ENCODE measurements at regions of chr14 and their contacts with region 1.

Region 1: GRCh38 chr14:49892636-49893308 is at the start of gene ARF6:
- H3K4me3 Mint-ChIP-seq: peak within 1 kb of the TSS; percentile 83
- H3K27ac Mint-ChIP-seq: peak within 1 kb of the TSS; percentile 99
- H3K4me1 Mint-ChIP-seq: peaks cover 31% of the 10 kb centered on the region
- H3K27me3 Mint-ChIP-seq: no peaks in the 10 kb centered on the region

Region 2: DNA sequence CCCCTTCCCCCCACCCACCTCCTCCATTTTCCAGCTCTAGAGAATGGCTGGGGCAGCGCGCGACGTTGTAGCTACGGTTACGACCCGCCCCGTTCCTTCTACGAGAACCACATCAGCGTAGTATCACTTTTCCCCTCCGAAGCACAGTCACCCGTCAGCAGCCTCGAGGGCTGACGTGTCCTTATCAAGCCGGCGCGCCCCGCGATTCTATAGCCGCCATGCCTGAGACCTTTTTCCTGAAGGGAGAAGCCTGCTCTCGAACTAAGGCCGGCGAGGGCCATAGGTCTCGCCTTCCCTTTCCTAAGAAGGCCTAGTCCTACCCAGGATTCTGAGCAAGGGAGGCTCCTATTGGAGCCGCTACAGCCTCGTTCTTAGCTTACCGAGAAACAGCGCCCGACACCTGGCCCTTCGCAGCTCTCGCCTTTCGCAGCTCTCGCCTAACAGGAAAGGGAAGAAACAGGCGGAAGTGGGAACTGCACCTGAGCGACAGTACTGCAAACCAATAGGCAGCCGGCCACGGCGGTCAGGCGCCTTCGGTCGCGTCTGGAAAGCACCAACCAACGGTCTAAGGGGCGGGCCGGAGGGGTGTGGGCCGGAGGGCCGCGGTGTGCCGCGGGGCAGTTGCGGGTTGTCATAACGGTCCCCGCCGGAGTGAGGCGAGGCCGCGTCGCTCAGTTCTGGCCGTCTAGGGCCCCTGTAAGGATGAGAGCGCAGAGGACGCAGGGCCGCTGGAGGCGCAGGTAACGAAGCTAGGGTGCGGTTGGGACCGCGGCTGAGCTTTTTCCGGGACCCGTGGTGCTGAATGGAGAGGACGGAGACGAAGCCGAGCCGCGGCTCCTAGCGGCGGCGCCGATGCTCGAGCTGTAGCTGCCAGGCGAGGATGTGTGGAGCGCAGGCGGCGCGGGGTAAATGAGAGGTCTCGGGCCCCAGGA is 272.3 kb before region 1 on chr14 and contains the starts of genes MGAT2 and RPL36AL:
- intact Hi-C with region 1: no loop called
- H3K4me3 Mint-ChIP-seq: peak within 1 kb of the TSS; percentile 99
- H3K27ac Mint-ChIP-seq: peak within 1 kb of the TSS; percentile 100
- H3K4me1 Mint-ChIP-seq: peaks cover 27% of the 10 kb centered on the region
- H3K27me3 Mint-ChIP-seq: no peaks in the 10 kb centered on the region

Region 3: GRCh38 chr14:49867831-49868723 is 24.7 kb before region 1 on chr14:
- intact Hi-C with region 1: loop called (anchors 1 kb)
- H3K4me3 Mint-ChIP-seq: peak overlapping the region; percentile 93
- H3K27ac Mint-ChIP-seq: peak overlapping the region; percentile 98
- H3K4me1 Mint-ChIP-seq: peaks cover 29% of the 10 kb centered on the region
- H3K27me3 Mint-ChIP-seq: no peaks in the 10 kb centered on the region

Region 4: GRCh38 chr14:49879683-49880204 is 13.0 kb before region 1 on chr14:
- intact Hi-C with region 1: loop called (anchors 1 kb)
- H3K4me3 Mint-ChIP-seq: no peak overlapping the region
- H3K27ac Mint-ChIP-seq: peak overlapping the region; percentile 97
- H3K4me1 Mint-ChIP-seq: peaks cover 44% of the 10 kb centered on the region
- H3K27me3 Mint-ChIP-seq: peaks cover 3% of the 10 kb centered on the region

Region 5: GRCh38 chr14:49934646-49935045 is 41.9 kb after region 1 on chr14:
- intact Hi-C with region 1: loop called (anchors 5 kb)
- H3K4me3 Mint-ChIP-seq: no peak overlapping the region
- H3K27ac Mint-ChIP-seq: peak overlapping the region; percentile 67
- H3K4me1 Mint-ChIP-seq: peaks cover 45% of the 10 kb centered on the region
- H3K27me3 Mint-ChIP-seq: no peaks in the 10 kb centered on the region

Region 6: DNA sequence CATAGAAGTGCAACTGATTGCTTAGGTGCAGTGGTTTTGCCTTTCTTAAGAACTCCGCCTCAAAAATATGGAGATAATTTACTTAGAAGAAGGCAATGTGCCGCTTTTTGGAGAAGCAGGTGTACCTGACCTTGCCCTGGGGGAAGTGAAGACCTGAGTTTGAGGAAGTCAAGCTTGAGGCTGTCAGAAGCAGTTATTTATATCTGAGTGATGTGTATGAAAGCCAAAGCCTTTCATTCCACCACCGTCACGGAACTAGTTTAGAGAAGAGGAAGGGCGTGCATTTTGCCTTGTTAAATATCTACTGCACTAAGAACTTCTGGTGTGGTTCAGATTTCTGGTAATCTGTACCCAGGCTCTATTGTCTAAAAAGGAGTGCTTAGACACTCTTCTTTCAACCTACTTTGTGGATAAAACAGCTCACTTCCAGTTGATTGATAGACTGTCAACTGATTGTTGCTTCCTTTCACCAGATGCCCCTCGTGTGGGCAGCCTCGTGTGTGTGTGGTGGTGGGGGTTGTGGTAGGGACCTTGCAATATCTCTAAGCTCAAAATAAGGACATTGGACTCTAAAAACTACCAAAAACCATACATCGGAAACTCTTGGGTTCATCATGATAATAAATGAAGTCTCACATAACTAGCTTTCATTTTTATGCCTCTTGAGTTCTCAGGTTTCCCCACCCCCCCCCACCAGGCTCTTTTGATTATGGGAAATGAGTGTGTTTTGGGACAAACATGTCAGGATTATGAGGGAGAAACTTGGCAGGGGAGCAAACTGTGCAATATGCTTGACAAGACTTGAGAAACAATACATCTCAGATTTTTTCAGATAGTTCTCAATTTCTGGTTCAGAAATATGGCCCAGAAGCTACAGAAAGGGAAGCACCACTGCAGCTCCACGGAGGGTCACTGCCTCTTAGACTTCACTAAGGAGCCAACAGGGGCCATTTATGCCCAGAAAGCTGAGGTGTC is 78.7 kb after region 1 on chr14:
- intact Hi-C with region 1: loop called (anchors 2 kb)
- H3K4me3 Mint-ChIP-seq: peak overlapping the region; percentile 52
- H3K27ac Mint-ChIP-seq: peak overlapping the region; percentile 96
- H3K4me1 Mint-ChIP-seq: peaks cover 64% of the 10 kb centered on the region
- H3K27me3 Mint-ChIP-seq: no peaks in the 10 kb centered on the region

Region 7: DNA sequence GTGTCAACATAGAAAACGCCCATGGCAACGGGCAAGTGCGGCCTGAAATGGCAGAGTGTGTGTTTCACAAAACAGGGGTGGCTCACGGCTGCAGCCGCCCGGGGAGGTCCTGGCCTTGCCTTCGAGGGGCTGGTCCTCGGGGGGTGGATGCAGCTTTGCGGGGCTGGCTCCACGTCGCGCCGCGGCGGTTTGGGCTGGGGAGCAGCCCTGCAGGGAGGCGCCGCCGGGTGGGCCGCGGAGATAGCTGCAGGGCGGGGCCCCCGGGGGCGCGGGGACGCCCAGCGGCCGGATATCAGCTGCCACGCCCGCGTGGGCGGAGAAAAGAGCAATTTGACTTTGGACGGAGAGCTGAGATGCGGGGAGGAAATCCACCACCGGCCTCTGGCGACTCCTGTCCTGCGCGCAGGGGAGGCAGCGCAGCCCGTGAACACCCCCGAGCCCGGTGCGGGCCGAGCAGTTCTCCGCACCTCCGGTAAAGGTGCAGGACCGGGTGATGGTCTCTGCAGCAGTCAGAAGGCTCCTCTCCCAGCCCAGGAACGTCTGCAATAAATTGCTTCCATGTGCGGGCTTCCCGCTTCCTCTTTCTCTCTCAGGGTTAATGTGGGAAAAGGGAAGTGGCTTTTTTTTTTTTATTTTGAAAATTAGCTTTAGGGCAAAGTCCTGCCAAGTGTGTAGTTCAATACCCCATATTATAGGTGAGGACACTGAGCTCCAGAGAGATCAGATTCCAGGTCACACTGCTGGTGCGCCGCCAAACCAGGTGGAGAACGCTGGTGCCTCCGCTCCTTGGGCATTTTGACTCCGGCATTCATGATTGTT is 110.7 kb after region 1 on chr14:
- intact Hi-C with region 1: loop called (anchors 2 kb)
- H3K4me3 Mint-ChIP-seq: peak overlapping the region; percentile 82
- H3K27ac Mint-ChIP-seq: peak overlapping the region; percentile 98
- H3K4me1 Mint-ChIP-seq: peaks cover 68% of the 10 kb centered on the region
- H3K27me3 Mint-ChIP-seq: no peaks in the 10 kb centered on the region

Region 8: DNA sequence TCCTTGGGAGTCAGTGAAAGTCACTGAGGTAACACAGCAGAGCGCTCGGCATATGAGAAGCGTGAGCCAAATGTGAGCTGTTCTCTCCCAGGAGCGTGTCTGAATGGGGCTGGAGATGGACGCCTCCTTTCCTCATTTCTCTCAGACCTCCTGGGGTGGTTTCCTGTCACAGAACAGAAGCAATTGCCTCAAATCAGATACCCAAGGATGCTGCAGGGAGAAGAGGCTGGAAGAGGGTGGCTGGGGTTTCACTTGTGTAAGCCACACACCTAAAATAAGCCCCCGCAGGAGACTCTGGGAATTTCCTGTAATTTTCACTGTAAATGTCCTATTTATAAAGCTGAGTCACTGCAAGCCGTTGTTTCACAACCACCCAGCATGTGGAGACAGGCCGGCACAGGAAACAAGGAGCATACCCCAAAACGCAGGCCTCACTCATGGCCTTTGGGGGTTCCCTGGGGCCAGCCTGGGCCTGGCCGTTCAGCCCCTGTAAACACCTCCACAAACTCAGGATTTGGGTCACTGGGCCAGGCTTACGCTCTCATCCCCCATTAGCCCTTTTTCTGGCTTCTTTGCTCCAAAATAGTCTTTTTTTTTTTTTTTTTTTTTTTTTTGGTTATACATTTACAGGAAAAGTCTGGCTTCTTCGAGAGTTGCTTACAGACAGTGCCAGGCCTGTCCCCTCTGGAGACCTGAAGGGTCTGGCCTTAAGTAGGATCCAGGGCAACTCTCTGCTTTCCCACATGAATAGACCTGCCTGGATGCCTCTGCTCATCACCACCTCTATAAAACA is 168.3 kb after region 1 on chr14:
- intact Hi-C with region 1: loop called (anchors 5 kb)
- H3K4me3 Mint-ChIP-seq: no peak overlapping the region
- H3K27ac Mint-ChIP-seq: peak overlapping the region; percentile 85
- H3K4me1 Mint-ChIP-seq: peaks cover 91% of the 10 kb centered on the region
- H3K27me3 Mint-ChIP-seq: no peaks in the 10 kb centered on the region

Region 9: GRCh38 chr14:50139192-50139591 is 246.4 kb after region 1 on chr14:
- intact Hi-C with region 1: no loop called
- H3K4me3 Mint-ChIP-seq: no peak overlapping the region
- H3K27ac Mint-ChIP-seq: no peak overlapping the region
- H3K4me1 Mint-ChIP-seq: no peaks in the 10 kb centered on the region
- H3K27me3 Mint-ChIP-seq: no peaks in the 10 kb centered on the region

Region 10: DNA sequence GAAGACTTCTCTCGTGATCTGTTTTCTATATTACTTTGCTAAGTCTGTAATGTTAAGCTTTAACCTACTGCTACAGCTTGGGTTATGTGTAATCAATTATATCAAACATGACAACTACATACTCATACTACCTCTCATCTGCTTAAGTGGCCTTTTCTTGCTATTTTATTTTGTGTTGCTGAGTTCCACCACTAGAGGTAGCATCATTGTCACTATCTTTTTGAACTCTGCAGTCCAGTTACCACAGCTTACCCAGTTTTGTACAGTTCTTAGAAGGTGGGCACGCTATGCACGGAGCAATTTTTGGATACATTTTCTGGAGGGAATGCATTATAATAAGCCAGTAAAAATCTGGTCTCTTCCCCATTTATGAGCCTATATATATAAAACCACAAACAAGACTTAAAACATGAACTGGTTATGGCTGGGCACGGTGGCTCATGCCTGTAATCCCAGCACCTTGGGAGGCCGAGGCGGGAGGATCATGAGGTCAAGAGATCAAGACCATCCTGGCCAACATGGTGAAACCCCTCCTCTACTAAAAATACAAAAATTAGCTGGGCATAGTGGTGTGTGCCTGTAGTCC is 726.9 kb after region 1 on chr14:
- intact Hi-C with region 1: no loop called
- H3K4me3 Mint-ChIP-seq: no peak overlapping the region
- H3K27ac Mint-ChIP-seq: no peak overlapping the region
- H3K4me1 Mint-ChIP-seq: no peaks in the 10 kb centered on the region
- H3K27me3 Mint-ChIP-seq: no peaks in the 10 kb centered on the region